Activated CD8-positive, alpha-beta T cell treated with anti-CD3 and anti-CD28 coated beads, Interleukin-2, amount 10 ng/mL, durations not matched to agents 7 days and 5 days (primary cell): ENCODE measurements at regions of chr6 and their contacts with region 1.

Region 1: GRCh38 chr6:106187424-106187982 is 101.4 kb downstream of the PRDM1 start:
- DNase-seq: no peak
- ATAC-seq: peak; percentile 59
- H3K4me3 Mint-ChIP-seq: peak overlapping the region; percentile 24
- H3K27ac Mint-ChIP-seq: peak overlapping the region; percentile 76
- H3K4me1 Mint-ChIP-seq: peaks cover 60% of the 10 kb centered on the region
- H3K27me3 Mint-ChIP-seq: no peaks in the 10 kb centered on the region

Region 2: GRCh38 chr6:106141441-106142237 is 45.9 kb before region 1 on chr6:
- CTCF ChIA-PET with region 1: interaction called, 5 read pairs
- POLR2A ChIA-PET with region 1: interaction called, 11 read pairs
- DNase-seq: peak; percentile 85
- ATAC-seq: peak; percentile 87
- H3K4me3 Mint-ChIP-seq: peak overlapping the region; percentile 67
- H3K27ac Mint-ChIP-seq: peak overlapping the region; percentile 97
- H3K4me1 Mint-ChIP-seq: peaks cover 73% of the 10 kb centered on the region
- H3K27me3 Mint-ChIP-seq: no peaks in the 10 kb centered on the region